ENCODE measurements at regions of chr2 and their contacts with region 1.

Region 1: GRCh38 chr2:96638144-96639121 is at the start of gene KANSL3:
- DNase-seq: peak; percentile 93
- H3K4me3 Mint-ChIP-seq: peak within 1 kb of the TSS; percentile 79
- H3K27ac Mint-ChIP-seq: peak within 1 kb of the TSS; percentile 60
- H3K4me1 Mint-ChIP-seq: peaks cover 19% of the 10 kb centered on the region
- H3K27me3 Mint-ChIP-seq: no peaks in the 10 kb centered on the region
- CTCF ChIP-seq: no peak
- total RNA-seq, gene KANSL3: 39.6 and 43.9 TPM in 2 replicates

Region 2: GRCh38 chr2:95115418-95115817 is 1523.0 kb before region 1 on chr2:
- CTCF ChIA-PET with region 1: no interaction called
- intact Hi-C with region 1: no loop called
- DNase-seq: peak; percentile 71
- H3K4me3 Mint-ChIP-seq: no peak overlapping the region
- H3K27ac Mint-ChIP-seq: no peak overlapping the region
- H3K4me1 Mint-ChIP-seq: peaks cover 17% of the 10 kb centered on the region
- H3K27me3 Mint-ChIP-seq: no peaks in the 10 kb centered on the region
- CTCF ChIP-seq: peak; percentile 65

Region 3: DNA sequence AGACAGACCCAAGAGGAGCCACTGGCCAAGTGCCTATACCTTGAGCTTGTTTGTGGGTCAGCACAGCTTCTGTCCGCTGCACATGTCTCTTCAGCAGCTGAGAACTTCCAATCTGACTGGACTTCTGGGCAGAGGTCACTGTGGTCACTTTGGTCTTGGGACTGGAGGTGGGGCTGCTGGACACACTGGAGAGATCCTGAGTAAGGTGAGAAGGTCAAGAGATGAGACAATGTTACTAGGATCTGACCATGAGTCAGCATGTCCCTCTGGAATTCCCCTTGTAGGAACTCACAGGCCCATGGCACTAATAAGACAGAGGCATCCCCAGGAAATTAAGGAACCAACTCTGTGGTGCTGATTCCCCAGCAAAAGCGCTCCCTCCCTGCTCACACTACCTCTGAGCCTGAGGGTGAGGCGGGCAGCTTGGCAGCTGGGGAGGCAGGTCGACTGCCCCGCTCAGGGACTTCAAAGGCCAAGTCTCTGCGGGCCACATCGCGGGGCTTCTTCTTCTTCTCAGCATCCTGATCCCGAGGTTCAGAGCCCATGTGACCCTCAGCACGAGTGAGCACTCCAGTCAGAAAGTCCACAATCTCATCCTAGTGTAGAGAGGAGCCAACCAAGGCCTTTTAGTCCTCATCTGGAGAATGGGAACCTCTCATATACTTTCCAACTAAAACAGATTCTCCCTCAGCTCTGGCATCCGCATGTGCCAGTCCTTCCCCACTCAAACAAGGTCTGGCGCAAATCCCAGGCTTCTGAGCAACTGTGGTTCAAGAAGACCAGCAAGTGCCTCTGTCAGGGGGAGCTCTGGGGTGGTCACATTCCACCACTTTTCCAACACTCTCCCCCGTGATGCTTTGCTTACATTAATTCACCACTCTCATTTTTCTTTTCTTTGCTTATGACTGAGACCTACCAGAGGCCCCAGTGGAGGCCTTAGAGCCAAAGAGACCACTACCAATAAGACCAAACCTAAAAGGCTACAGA is 29.7 kb before region 1 on chr2:
- CTCF ChIA-PET with region 1: no interaction called
- intact Hi-C with region 1: no loop called
- DNase-seq: no peak
- H3K4me3 Mint-ChIP-seq: no peak overlapping the region
- H3K27ac Mint-ChIP-seq: peak overlapping the region; percentile 61
- H3K4me1 Mint-ChIP-seq: no peaks in the 10 kb centered on the region
- H3K27me3 Mint-ChIP-seq: no peaks in the 10 kb centered on the region
- CTCF ChIP-seq: no peak

Region 4: DNA sequence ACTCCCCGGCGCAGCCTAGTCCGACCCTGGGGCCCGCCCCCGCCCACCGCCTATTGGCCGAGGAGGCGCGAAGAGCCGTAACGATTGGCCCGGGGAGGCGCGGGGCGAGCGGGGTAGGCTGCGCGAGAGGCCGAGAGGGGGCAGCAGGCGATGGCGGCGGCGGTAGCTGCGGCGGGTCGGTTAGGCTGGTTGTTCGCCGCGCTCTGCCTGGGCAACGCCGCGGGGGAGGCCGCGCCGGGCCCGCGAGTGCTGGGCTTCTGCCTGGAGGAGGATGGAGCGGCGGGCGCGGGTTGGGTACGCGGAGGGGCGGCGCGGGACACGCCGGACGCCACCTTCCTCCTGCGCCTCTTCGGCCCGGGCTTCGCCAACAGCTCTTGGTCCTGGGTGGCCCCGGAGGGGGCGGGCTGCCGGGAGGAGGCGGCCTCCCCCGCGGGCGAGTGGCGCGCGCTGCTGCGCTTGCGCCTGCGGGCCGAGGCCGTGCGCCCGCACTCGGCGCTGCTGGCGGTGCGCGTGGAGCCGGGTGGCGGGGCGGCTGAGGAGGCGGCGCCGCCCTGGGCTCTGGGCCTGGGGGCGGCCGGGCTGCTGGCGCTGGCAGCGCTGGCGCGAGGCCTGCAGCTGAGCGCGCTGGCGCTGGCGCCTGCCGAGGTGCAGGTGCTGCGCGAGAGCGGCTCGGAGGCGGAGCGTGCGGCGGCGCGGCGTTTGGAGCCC is 177.8 kb after region 1 on chr2 and contains the start of gene CNNM3:
- CTCF ChIA-PET with region 1: no interaction called
- intact Hi-C with region 1: loop called (anchors 5 kb)
- DNase-seq: peak; percentile 98
- H3K4me3 Mint-ChIP-seq: peak within 1 kb of the TSS; percentile 77
- H3K27ac Mint-ChIP-seq: peak within 1 kb of the TSS; percentile 52
- H3K4me1 Mint-ChIP-seq: peaks cover 38% of the 10 kb centered on the region
- H3K27me3 Mint-ChIP-seq: no peaks in the 10 kb centered on the region
- CTCF ChIP-seq: peak; percentile 65
- total RNA-seq, gene CNNM3: 22.5 and 25.1 TPM in 2 replicates

Measured in Calu3 (cell line).